Right ventricle myocardium superior (tissue), 1 donor: ENCODE measurements at regions of chr11 and their contacts with region 1.

Region 1: DNA sequence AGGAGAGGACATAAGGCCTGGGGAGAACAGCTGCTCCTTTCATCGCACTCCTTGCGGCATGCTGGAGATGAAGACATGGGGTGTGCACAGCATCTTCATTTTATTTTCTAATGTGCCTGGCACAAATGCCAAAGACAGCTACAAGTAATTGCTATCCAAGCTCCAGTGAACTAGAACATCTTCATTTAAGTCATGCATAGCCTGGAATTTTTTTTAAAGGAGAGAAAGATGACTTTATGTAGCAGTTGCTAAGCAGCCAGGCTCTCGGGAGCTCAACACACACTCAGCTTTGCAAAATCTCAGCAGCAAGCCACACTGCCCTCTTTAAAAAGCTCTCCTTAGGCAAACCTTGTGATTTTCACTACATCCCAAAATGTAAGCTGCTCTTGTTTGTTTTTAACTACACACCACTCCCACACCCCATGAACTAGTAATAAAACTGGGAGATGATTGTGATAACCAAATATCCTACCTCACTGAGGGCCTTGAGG is 164.5 kb upstream of the POU2AF2 start:
- DNase-seq: no peak
- ATAC-seq: no peak

Region 2: DNA sequence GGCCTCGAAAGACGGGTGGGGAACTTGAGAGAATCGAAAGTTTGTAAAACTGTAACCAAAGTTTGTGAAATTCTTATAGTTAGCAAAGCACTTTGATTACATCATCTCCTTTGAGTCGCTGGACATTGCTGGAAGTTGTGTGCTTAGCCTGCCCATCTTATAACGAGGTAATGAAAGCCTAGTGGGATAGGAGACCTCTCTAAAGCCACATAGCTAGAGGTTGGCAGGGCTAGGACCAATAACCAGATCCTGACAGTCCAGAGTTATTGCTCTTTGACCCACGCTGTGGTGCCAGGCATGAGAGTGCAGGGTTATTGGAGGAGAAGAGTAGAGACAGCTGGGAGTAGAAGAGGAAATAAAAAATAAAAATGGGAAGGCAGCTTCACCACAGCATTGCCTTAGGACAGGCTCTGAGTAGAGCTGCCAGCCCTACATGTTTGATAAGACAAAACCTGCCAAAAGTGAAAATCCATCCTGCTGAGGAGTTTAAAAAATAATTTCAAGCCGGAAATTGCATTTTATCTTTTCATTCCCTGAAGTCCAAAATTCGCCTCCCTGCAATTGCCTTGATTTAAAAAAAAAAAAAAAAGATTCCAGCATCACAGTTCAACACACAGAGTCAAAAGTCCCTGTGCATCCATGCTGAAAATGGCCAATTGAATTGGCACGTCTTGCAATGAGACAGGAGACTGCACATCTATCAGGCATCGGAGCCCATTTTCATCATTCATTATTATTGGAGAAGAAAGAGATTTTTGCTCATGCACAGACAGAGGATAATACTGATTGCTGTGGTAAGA is 61.0 kb before region 1 on chr11:
- intact Hi-C with region 1: no loop called
- DNase-seq: no peak
- ATAC-seq: peak; percentile 67

Region 3: GRCh38 chr11:111148953-111149352 is 67.9 kb after region 1 on chr11:
- intact Hi-C with region 1: loop called (anchors 10 kb)
- DNase-seq: no peak
- ATAC-seq: peak; percentile 25